ENCODE measurements at regions of chr19 and their contacts with region 1.

Region 1: GRCh38 chr19:57830071-57830602 is at the start of gene ZNF587B:
- DNase-seq: peak; percentile 42
- H3K4me3 ChIP-seq: peak within 1 kb of the TSS; percentile 26 to 56 (median 37)
- H3K27ac ChIP-seq: peak within 1 kb of the TSS; percentile 14
- H3K4me1 ChIP-seq: no peaks in the 10 kb centered on the region
- H3K27me3 ChIP-seq: no peaks in the 10 kb centered on the region
- CTCF ChIP-seq: peak in 1 of 2 donors; percentile 53
- total RNA-seq, gene ZNF587B: 16.1 to 27.2 TPM

Region 2: DNA sequence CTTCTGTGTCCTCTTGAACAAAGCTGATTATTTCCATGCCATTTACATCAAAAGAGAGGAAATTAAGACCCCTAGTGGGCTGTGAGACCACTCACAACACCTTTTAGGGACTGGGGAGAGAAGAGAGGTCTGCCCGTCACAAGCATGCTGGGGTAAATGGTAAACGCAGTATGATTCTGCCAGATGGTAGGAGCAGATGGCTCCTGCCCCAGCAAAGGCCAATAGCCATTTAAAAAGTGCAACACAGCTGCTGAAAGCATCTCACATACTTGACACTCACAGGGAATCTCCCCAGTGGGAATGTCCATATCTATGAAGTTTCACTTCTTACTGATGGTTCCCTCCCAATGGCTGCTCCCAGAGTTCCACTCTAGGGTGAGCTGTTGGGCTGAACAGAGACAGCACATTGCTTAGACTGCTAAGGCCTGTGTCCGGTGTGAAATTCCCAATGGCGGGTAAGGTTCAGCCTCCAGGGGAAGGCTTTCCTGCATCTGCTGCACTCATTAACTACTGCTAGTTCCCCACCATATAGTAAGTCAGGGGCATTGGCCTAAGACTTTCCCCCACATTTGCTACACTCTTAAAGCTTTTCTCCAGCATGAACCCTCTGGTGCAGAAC is 110.1 kb before region 1 on chr19:
- CTCF ChIA-PET with region 1: no interaction called
- dilution Hi-C with region 1: loop called (anchors 5 kb)
- in situ Hi-C with region 1: loop called in 1 of 2 experiments (anchors 25 kb)
- intact Hi-C with region 1: no loop called
- DNase-seq: no peak
- H3K4me3 ChIP-seq: no peak overlapping the region
- H3K27ac ChIP-seq: no peak overlapping the region
- H3K4me1 ChIP-seq: no peaks in the 10 kb centered on the region
- H3K27me3 ChIP-seq: no peaks in the 10 kb centered on the region
- CTCF ChIP-seq: no peak

Region 3: DNA sequence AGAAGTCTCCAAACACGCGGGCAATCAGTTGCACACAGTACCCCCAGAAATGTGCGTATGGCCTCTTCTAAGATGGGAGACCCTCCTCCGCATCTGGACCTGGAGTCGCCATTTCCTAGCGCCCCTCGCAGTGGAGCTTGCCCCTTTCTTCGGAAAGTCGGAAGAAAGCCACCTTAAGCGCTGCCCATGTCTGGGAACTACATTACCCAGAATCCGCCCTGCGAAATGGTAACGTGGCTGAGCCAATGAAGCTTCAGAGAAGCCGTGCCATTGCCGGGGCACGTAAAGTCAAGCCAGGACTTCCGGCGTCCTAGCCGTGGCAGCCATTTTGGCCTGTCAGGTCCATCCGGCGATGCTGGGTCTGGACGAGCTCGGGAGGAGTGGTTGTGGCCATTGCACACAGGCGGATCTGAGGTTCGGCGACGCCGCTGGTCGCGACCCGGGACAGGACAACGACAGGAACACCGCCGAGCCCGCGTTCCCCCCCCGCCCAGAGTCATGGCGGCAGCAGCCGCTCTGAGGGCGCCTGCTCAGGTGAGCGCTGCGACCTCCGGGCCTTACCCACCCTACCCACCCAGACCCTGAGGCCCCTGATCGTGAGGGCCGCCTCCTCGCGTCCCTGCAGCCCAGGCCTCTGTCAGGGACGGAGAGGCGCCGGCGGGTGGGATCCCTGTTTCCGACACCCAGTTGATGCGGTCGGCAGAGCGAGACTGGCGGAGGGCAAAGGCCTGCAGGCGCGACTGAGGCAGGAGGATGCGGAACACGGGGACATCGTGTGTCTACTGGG is 60.6 kb before region 1 on chr19 and contains the start of gene ZNF586:
- CTCF ChIA-PET with region 1: no interaction called
- dilution Hi-C with region 1: no loop called
- in situ Hi-C with region 1: no loop called
- intact Hi-C with region 1: no loop called
- DNase-seq: peak; percentile 88
- H3K4me3 ChIP-seq: peak within 1 kb of the TSS; percentile 58 to 92 (median 88)
- H3K27ac ChIP-seq: no peak within 1 kb of the TSS
- H3K4me1 ChIP-seq: peaks cover 5% of the 10 kb centered on the region
- H3K27me3 ChIP-seq: no peaks in the 10 kb centered on the region
- CTCF ChIP-seq: no peak
- total RNA-seq, gene ZNF586: 12.0 to 12.7 TPM

Region 4: GRCh38 chr19:57819475-57820148 is 10.5 kb before region 1 on chr19:
- CTCF ChIA-PET with region 1: no interaction called
- dilution Hi-C with region 1: no loop called
- in situ Hi-C with region 1: no loop called
- intact Hi-C with region 1: no loop called
- DNase-seq: peak; percentile 93
- H3K4me3 ChIP-seq: peak overlapping the region; percentile 83 to 89 (median 85)
- H3K27ac ChIP-seq: peak overlapping the region; percentile 75
- H3K4me1 ChIP-seq: peaks cover 10% of the 10 kb centered on the region
- H3K27me3 ChIP-seq: no peaks in the 10 kb centered on the region
- CTCF ChIP-seq: no peak

Region 5: DNA sequence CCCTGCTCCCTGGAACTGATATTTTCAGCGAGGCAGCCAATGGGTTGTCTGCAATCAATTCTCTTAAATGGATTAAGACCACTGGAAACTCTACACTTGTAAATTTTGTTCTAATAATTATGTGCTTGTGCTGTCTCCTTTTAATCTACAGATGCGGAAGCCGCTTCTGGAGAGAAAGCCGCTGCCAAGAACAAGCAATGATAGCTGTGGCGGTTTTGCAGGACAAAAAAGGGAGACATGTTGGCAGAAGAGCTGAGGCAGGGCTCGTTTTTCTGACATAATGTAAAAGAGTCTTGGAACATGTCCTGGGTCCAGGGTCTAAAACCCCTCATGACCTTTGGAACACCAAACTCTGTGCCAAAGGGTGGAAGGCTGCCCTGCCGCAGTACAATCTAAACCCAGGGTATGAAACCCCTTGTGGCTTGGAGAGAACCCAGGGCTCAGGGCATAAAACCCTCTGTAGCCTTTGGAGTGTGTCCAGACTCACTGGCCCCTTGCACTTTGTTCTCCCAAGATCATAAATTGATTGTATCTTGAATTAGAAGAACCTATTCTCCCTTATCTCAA is 73.6 kb after region 1 on chr19:
- CTCF ChIA-PET with region 1: no interaction called
- dilution Hi-C with region 1: no loop called
- in situ Hi-C with region 1: no loop called
- intact Hi-C with region 1: no loop called
- DNase-seq: no peak
- H3K4me3 ChIP-seq: no peak overlapping the region
- H3K27ac ChIP-seq: no peak overlapping the region
- H3K4me1 ChIP-seq: no peaks in the 10 kb centered on the region
- H3K27me3 ChIP-seq: no peaks in the 10 kb centered on the region
- CTCF ChIP-seq: no peak